Activated CD8-positive, alpha-beta T cell treated with anti-CD3 and anti-CD28 coated beads, Interleukin-2, amount 10 ng/mL, durations not matched to agents 7 days and 5 days (primary cell): ENCODE measurements at regions of chr20 and their contacts with region 1.

Region 1: DNA sequence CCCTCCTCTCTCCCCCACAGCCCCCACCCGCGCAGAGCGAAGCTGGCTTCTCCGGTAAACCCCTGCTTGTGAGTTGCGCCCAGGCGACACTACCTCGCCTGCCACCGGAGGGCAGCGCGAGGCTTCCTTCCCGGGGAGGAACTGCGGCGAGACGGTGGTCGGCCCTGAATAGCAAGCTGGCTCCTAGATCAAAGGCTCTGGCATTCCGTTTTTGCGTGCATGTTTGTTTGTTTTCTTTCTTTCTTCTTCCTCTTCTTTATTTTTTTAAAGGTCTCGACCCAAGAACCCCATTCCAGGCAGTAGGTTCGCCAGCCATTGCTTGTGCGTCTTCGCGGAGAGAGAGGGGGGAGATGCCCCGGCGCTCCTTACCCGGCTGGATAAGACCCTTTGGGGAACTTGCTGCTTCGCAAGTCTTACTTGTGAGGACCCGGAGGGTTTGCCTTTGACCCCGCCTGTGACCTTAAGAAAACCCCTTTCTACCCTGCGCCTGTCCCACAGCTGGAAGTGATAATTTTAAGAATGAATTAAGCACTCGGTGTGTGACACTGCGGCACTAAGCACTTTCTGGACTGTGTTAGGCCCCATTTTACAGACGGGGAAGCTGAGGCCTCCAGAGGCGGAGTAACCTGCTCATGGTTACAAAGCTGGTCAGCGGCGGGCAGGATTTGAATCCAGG is 92.7 kb upstream of the SIRPA start:
- DNase-seq: peak; percentile 65
- ATAC-seq: peak; percentile 71
- H3K4me3 Mint-ChIP-seq: peak overlapping the region; percentile 37
- H3K27ac Mint-ChIP-seq: no peak overlapping the region
- H3K4me1 Mint-ChIP-seq: peaks cover 9% of the 10 kb centered on the region
- H3K27me3 Mint-ChIP-seq: peaks cover 60% of the 10 kb centered on the region

Region 2: DNA sequence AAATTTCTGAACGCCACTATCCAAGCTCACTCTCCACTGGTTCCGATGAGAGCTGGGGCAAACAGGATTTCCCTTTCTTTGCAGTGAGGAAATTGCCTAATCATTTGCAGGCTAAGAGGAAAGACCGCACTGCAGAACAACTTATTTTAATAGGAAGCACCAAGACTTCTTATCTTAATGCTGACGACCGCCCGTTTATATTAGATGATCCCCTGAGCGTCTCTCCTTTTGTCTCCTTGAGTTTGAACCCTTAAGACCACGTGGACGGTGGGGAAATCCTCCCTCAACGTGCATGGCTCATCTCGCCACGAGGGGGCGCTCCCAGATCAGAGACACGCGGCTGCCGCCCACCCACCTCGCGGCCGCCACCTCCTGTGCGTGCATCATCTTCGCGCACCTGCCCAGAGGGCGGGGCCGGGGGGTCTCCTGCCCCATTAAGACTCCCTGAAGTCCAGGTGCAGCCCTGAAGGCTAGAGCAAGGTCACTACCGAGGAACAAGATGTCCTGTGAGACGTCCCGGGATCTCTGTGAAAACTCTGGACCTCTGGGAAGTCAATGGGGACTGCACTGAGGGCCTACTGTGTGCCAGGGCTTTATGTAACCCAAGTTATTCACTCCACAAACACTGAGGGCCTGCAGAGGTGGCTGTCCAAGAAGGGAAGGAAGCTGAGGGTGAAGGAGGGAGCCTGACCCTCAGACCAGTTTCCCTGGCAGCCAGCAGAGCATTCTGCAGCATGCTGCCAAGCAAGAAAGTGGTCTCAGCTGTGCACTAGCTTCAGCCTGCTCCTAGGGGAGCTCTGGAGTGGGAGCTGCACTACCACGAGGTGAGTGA is 163.2 kb after region 1 on chr20:
- CTCF ChIA-PET with region 1: interaction called, 11 read pairs
- POLR2A ChIA-PET with region 1: no interaction called
- DNase-seq: peak; percentile 83
- ATAC-seq: peak; percentile 90
- H3K4me3 Mint-ChIP-seq: peak overlapping the region; percentile 32
- H3K27ac Mint-ChIP-seq: no peak overlapping the region
- H3K4me1 Mint-ChIP-seq: peaks cover 12% of the 10 kb centered on the region
- H3K27me3 Mint-ChIP-seq: peaks cover 30% of the 10 kb centered on the region